Activated naive CD4-positive, alpha-beta T cell treated with anti-CD3 and anti-CD28 coated beads, Interleukin-2, amount 10 ng/mL, durations not matched to agents 7 days and 5 days (primary cell): ENCODE measurements at regions of chr14 and their contacts with region 1.

Region 1: DNA sequence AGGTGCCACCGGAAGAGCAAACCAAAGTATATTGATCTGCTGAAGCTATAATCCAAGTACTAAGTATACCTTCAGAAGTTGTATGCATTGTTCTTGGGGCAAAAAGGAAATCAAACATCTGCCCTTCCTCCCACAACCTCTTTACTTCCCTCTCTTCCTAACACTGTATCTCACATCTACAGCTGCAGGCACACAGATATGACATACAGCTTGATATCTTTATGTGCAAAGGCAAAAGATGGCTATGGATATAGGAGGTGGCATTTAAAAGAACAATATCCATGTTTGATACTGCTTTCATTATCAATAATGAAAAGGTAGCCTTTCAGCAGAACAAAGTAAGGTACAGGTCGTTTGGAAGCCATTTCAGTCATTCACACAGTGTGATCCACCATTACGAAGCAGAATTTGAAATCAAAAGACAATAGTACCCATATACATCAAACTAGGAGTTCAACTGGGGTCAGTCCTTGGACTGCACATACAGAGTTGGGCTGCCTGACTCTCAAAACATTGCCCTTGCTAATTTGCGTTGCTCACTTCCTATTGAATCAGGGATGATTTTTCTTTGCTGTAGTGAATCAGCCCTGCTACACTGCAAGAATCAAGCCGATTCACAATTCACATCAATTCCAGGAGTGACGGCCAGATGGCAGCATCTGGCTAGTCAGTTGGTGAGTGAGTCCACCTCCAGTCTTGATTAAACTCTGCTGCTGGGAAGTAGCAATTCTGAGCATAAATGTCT is 8.9 kb downstream of the ANG start:
- DNase-seq: peak; percentile 78
- H3K4me3 Mint-ChIP-seq: no peak overlapping the region
- H3K27ac Mint-ChIP-seq: no peak overlapping the region
- H3K4me1 Mint-ChIP-seq: no peaks in the 10 kb centered on the region
- H3K27me3 Mint-ChIP-seq: peaks cover 12% of the 10 kb centered on the region

Region 2: GRCh38 chr14:20494935-20495766 is 202.3 kb before region 1 on chr14:
- CTCF ChIA-PET with region 1: no interaction called
- DNase-seq: no peak
- H3K4me3 Mint-ChIP-seq: no peak overlapping the region
- H3K27ac Mint-ChIP-seq: peak overlapping the region; percentile 44
- H3K4me1 Mint-ChIP-seq: peaks cover 47% of the 10 kb centered on the region
- H3K27me3 Mint-ChIP-seq: peaks cover 4% of the 10 kb centered on the region

Region 3: GRCh38 chr14:20789230-20789813 is 91.9 kb after region 1 on chr14:
- CTCF ChIA-PET with region 1: no interaction called
- DNase-seq: no peak
- H3K4me3 Mint-ChIP-seq: no peak overlapping the region
- H3K27ac Mint-ChIP-seq: no peak overlapping the region
- H3K4me1 Mint-ChIP-seq: peaks cover 9% of the 10 kb centered on the region
- H3K27me3 Mint-ChIP-seq: peaks cover 4% of the 10 kb centered on the region

Region 4: DNA sequence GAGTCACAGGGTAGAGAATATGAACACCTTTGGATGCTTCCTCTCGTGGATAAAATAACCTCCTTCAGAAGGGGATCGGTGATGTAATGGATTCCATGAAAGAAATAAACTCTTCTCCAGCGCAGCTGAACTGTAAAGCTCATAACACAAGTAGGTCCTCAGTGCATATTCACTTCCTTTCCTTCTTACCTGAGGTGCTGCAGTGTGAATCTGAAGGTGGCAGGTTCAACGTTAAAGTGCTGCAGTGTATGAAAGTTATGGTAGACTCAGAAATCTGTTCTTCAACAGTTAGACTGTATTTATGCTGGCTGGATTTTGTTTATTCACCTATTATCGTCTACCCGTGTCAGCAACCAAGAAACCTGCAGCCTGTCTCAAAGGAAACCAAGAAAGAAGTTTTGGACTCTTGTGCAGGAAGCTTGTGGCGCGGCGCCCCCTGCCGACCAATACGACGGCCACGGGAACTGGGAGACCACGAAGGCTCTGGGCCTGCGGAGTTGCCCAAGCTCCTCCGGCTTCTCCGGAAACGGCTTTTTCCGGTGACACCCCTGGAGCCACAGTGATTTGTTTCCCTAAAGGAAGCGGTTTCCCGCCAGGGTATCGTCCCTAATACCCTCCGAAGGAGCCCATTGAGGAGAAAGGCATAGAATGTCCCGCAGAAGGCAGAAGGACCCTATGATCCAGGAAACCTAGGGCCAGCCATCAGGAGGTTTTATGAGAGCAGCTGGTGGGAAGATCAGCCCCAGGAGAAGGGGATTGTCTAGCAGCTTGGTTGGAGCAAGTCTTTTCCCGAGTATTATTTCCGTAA is 176.1 kb after region 1 on chr14:
- CTCF ChIA-PET with region 1: interaction called, 19 read pairs
- DNase-seq: peak; percentile 86
- H3K4me3 Mint-ChIP-seq: no peak overlapping the region
- H3K27ac Mint-ChIP-seq: no peak overlapping the region
- H3K4me1 Mint-ChIP-seq: peaks cover 16% of the 10 kb centered on the region
- H3K27me3 Mint-ChIP-seq: peaks cover 42% of the 10 kb centered on the region